ENCODE measurements at regions of chr4 and their contacts with region 1.

Region 1: GRCh38 chr4:153115322-153116290 is 88.6 kb upstream of the TRIM2 start:
- DNase-seq: peak; percentile 69
- H3K4me3 Mint-ChIP-seq: peak overlapping the region; percentile 56
- H3K27ac Mint-ChIP-seq: peak overlapping the region; percentile 80
- H3K4me1 Mint-ChIP-seq: no peaks in the 10 kb centered on the region
- H3K27me3 Mint-ChIP-seq: peaks cover 6% of the 10 kb centered on the region

Region 2: GRCh38 chr4:152679414-152680281 is 436.0 kb before region 1 on chr4 and contains the start of gene TMEM154:
- intact Hi-C with region 1: loop called (anchors 10 kb)
- DNase-seq: peak; percentile 77
- H3K4me3 Mint-ChIP-seq: peak within 1 kb of the TSS; percentile 91
- H3K27ac Mint-ChIP-seq: peak within 1 kb of the TSS; percentile 92
- H3K4me1 Mint-ChIP-seq: peaks cover 84% of the 10 kb centered on the region
- H3K27me3 Mint-ChIP-seq: no peaks in the 10 kb centered on the region
- total RNA-seq, gene TMEM154: 13.0 and 13.3 TPM in 2 replicates

Region 3: GRCh38 chr4:152937336-152938236 is 178.0 kb before region 1 on chr4:
- intact Hi-C with region 1: loop called (anchors 2 kb)
- DNase-seq: no peak
- H3K4me3 Mint-ChIP-seq: peak overlapping the region; percentile 80
- H3K27ac Mint-ChIP-seq: no peak overlapping the region
- H3K4me1 Mint-ChIP-seq: peaks cover 24% of the 10 kb centered on the region
- H3K27me3 Mint-ChIP-seq: peaks cover 74% of the 10 kb centered on the region

Region 4: GRCh38 chr4:153060196-153060595 is 55.4 kb before region 1 on chr4:
- intact Hi-C with region 1: no loop called
- DNase-seq: no peak
- H3K4me3 Mint-ChIP-seq: no peak overlapping the region
- H3K27ac Mint-ChIP-seq: no peak overlapping the region
- H3K4me1 Mint-ChIP-seq: no peaks in the 10 kb centered on the region
- H3K27me3 Mint-ChIP-seq: peaks cover 7% of the 10 kb centered on the region

Region 5: DNA sequence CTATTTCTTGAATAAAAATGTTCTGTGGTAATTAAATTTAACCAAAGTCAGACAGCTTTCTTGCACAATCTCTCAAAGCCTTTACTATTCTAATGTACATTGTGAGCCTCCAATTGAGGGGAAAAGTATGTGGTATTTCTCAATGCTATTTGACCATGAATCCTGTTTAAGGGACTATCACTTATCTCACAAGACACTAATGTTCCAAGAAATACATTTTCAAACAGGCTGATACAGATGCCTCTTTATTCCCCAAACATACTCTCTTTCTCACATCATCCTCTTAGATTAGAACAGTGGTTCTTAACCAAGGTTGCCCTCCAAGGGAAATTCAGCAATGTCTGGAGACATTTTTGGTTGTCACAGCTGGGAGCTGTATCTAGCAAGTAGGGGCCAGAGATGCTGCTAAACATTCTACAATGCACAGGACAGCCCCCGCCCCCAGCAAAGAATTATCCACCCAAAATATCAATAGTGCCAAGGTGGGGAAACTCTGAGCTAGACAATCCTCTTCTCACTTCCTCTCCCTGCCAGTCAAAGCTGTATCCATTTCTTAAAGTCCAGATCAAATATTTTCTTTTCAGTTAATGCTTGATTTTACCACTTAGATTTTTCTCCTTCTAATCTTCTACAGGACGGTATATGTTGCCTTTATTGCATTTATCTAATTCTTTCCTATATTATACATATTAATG is 40.5 kb before region 1 on chr4:
- intact Hi-C with region 1: no loop called
- DNase-seq: no peak
- H3K4me3 Mint-ChIP-seq: no peak overlapping the region
- H3K27ac Mint-ChIP-seq: no peak overlapping the region
- H3K4me1 Mint-ChIP-seq: no peaks in the 10 kb centered on the region
- H3K27me3 Mint-ChIP-seq: peaks cover 27% of the 10 kb centered on the region

Region 6: GRCh38 chr4:153137159-153137558 is 21.6 kb after region 1 on chr4:
- intact Hi-C with region 1: loop called (anchors 1 kb)
- DNase-seq: no peak
- H3K4me3 Mint-ChIP-seq: no peak overlapping the region
- H3K27ac Mint-ChIP-seq: no peak overlapping the region
- H3K4me1 Mint-ChIP-seq: peaks cover 26% of the 10 kb centered on the region
- H3K27me3 Mint-ChIP-seq: peaks cover 22% of the 10 kb centered on the region